ENCODE measurements at regions of chr14 and their contacts with region 1.

Region 1: GRCh38 chr14:75126679-75127473 is at the start of gene NEK9:
- DNase-seq: peak; percentile 90
- H3K4me3 ChIP-seq: peak within 1 kb of the TSS; percentile 52 to 80 (median 64)
- H3K27ac ChIP-seq: peak within 1 kb of the TSS; percentile 95 to 97 (median 96)
- H3K4me1 ChIP-seq: peaks cover 19 to 47% (median 27%) of the 10 kb centered on the region in 4 donors
- H3K27me3 ChIP-seq: no peaks in the 10 kb centered on the region
- CTCF ChIP-seq: no peak
- EP300 ChIP-seq: no peak
- POLR2A ChIP-seq: peak; percentile 80
- total RNA-seq, gene NEK9: 24.4 to 121 (median 53.4) TPM

Region 2: DNA sequence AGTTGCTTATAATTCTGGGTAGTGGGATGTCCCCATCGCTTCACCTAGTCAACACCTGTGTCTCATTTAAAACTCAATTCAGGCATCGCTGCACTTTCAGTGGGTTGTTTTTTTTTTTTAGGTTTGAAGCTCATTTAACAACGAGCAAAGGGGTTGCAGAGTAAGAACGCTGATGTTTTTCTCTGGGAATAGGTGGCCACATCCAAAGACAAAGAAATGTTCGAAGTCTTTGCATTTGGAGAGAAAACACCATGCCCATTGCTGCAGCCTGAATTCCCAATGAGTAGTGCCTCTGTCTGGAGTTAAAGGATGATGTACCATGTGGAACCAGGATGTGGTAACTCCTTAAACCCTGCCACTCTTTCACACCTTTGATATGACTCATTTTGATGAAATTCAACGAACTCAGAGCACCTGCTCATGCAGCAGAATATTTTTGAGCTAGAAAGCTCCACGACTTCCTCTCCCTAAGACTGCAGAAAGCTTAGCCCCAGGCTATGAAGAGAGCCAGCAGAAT is 360.3 kb after region 1 on chr14:
- in situ Hi-C with region 1: loop called (anchors 5 to 25 kb)
- intact Hi-C with region 1: loop called (anchors 5 kb)
- DNase-seq: no peak
- H3K4me3 ChIP-seq: no peak overlapping the region
- H3K27ac ChIP-seq: no peak overlapping the region
- H3K4me1 ChIP-seq: no peaks in the 10 kb centered on the region
- H3K27me3 ChIP-seq: no peaks in the 10 kb centered on the region
- CTCF ChIP-seq: no peak
- EP300 ChIP-seq: no peak
- POLR2A ChIP-seq: no peak